ENCODE measurements at regions of chr1 and their contacts with region 1.

Region 1: DNA sequence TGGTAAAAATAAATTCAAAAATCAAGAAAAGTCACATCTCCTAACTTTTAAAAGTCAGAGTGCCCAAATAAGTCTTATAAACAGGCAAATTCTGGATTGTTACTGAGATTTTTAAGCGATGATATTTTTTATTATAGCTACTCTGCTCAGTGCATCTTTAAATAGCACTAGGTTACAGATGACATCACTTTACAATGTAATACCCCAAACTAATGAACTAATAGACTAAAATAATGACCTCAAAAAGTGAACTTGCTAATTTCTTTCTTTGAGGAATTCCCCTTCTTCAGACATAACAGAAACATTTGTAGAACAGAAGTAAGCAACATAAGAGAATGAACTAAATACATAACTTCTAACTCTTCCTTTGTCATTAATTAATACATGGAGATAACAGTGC is 33.0 kb upstream of the ACTA1 start:
- DNase-seq: no peak
- H3K4me3 ChIP-seq: no peak overlapping the region
- H3K27ac ChIP-seq: no peak overlapping the region
- H3K4me1 ChIP-seq: no peaks in the 10 kb centered on the region
- CTCF ChIP-seq: no peak

Region 2: GRCh38 chr1:229440851-229441537 is 25.9 kb before region 1 on chr1:
- CTCF ChIA-PET with region 1: no interaction called
- POLR2A ChIA-PET with region 1: interaction called, 10 read pairs
- intact Hi-C with region 1: no loop called
- DNase-seq: no peak
- H3K4me3 ChIP-seq: no peak overlapping the region
- H3K27ac ChIP-seq: no peak overlapping the region
- H3K4me1 ChIP-seq: no peaks in the 10 kb centered on the region
- CTCF ChIP-seq: no peak